ENCODE measurements at regions of chr13 and their contacts with region 1.

Region 1: GRCh38 chr13:28636674-28637317 is 22.1 kb upstream of the POMP start:
- DNase-seq: peak; percentile 82
- H3K4me3 ChIP-seq: no peak overlapping the region
- H3K27ac ChIP-seq: no peak overlapping the region
- H3K4me1 ChIP-seq: peaks cover 15% of the 10 kb centered on the region
- H3K27me3 ChIP-seq: no peaks in the 10 kb centered on the region
- CTCF ChIP-seq: peak; percentile 93

Region 2: GRCh38 chr13:28138012-28138755 is 498.6 kb before region 1 on chr13 and contains the start of gene PAN3:
- CTCF ChIA-PET with region 1: no interaction called
- POLR2A ChIA-PET with region 1: no interaction called
- intact Hi-C with region 1: loop called (anchors 5 kb)
- DNase-seq: peak; percentile 96
- H3K4me3 ChIP-seq: peak within 1 kb of the TSS; percentile 98
- H3K27ac ChIP-seq: peak within 1 kb of the TSS; percentile 100
- H3K4me1 ChIP-seq: peaks cover 12% of the 10 kb centered on the region
- H3K27me3 ChIP-seq: no peaks in the 10 kb centered on the region
- CTCF ChIP-seq: no peak
- total RNA-seq, gene PAN3: 41.5 and 46.1 TPM in 2 replicates

Region 3: DNA sequence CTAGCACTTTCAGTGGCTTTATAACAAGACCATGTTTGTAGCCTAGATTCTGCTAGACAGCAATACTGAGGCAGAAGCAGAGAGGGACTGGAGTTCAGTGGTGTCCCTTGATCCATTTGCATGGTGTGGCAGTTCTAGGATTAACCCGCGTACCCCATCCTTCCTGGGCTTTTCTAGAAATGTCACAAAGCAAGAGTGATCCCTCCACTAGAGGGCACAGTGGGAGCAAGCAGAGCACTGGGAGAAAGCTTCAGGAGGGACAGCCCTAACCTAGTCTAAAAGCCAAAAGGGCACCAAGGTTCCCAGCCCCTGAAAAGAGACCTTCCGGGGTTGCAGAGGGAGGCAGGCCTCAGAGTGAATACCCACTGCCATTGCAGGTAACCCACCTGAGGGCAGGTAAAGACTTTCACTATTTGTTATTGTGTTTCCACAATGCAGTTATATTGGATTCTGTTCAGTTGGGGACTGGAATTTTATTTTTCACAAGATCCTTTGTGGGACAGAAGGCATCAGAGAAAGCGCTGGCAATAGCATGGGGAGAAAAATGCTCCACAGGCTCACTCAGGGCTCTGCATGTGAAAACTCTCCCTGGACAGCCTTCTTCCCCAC is 312.5 kb before region 1 on chr13:
- CTCF ChIA-PET with region 1: no interaction called
- POLR2A ChIA-PET with region 1: no interaction called
- intact Hi-C with region 1: loop called (anchors 1 kb)
- DNase-seq: peak; percentile 81
- H3K4me3 ChIP-seq: no peak overlapping the region
- H3K27ac ChIP-seq: no peak overlapping the region
- H3K4me1 ChIP-seq: peaks cover 12% of the 10 kb centered on the region
- H3K27me3 ChIP-seq: no peaks in the 10 kb centered on the region
- CTCF ChIP-seq: peak; percentile 90

Region 4: DNA sequence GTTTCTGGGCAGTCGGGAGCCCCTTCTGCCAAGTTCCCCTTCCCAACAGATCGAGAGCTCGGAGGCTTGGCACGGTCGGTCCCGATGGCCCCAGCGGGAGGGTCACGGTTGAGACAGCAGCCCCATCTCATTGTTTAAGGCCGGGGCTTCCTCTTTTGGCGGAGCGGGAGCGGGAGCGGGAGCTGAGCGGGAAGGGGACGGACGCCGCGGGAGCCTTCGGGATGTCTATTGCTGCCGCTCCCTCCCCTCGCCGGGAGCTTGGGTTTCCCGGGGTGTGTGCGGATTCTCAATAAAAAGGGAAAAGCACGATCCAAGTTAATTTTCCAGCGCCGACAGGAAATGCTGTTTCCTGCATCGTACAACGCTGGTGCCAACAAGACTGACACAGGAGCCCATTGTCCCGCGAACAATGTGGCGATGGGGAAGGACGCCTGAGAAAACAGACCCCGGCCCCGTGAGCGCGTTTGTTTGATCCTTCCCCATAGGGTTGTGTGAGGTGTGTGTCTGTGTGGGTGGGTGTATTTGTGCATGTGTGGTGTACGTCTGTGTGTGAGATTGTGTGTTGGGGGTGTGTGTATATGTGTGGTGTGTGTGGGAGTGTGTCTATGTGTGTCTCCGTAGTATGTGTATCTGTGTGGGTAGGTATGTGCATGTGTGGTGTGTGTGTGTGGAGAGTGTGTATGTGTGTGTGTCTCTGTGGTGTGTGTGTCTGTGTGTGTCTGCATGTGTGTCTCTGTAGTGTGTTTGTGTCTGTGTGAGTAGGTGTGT is 105.5 kb before region 1 on chr13:
- CTCF ChIA-PET with region 1: no interaction called
- POLR2A ChIA-PET with region 1: no interaction called
- intact Hi-C with region 1: loop called (anchors 5 kb)
- DNase-seq: peak; percentile 91
- H3K4me3 ChIP-seq: peak overlapping the region; percentile 49
- H3K27ac ChIP-seq: peak overlapping the region; percentile 62
- H3K4me1 ChIP-seq: peaks cover 20% of the 10 kb centered on the region
- H3K27me3 ChIP-seq: no peaks in the 10 kb centered on the region
- CTCF ChIP-seq: no peak

Region 5: DNA sequence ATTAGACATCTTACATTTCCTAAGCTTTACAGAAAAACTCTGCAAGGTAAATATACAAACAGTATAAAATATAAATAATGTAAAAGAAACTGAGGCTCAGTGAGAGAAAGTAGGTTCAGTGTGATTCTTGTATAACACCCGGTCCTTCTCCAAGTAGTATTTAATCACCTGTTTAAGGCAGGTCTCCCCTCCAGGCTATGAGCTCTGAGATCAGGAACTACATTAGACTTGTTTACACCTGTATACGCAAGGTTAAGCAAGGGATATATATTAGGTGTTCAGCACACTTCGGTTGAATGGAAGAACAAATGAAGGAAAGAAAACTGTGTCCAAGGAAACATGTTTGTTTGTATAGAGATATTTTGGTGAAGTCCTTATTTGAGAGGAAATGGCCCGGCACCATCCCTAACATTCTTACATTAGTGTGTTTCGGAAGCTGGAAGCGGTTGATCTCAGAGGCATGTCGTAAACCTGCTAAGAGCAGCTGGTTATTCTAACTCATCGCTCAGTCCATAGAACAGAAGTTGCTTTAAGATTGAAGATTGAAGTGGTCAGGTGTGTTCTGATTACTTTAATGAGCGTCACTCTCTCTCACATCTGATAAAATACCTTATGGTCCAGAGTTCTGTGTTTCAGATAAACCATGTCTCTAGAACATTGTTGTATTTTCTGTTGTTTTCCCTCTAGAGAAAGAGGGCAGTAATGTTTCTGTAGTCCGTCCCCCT is 81.9 kb before region 1 on chr13:
- CTCF ChIA-PET with region 1: no interaction called
- POLR2A ChIA-PET with region 1: no interaction called
- intact Hi-C with region 1: loop called (anchors 5 kb)
- DNase-seq: no peak
- H3K4me3 ChIP-seq: no peak overlapping the region
- H3K27ac ChIP-seq: no peak overlapping the region
- H3K4me1 ChIP-seq: peaks cover 33% of the 10 kb centered on the region
- H3K27me3 ChIP-seq: no peaks in the 10 kb centered on the region
- CTCF ChIP-seq: no peak